Aorta (tissue), 5 donors: ENCODE measurements at regions of chr7 and their contacts with region 1.

Region 1: GRCh38 chr7:130440527-130441365 is at the start of gene CEP41:
- DNase-seq: peak; percentile 98 to 99
- ATAC-seq: peak; percentile 98
- H3K4me3 ChIP-seq: peak within 1 kb of the TSS; percentile 61 to 80
- H3K27ac ChIP-seq: no peak within 1 kb of the TSS
- H3K4me1 ChIP-seq: no peaks in the 10 kb centered on the region
- H3K27me3 ChIP-seq: no peaks in the 10 kb centered on the region
- total RNA-seq, gene CEP41: 6.2 to 6.6 TPM

Region 2: GRCh38 chr7:130381468-130382312 is 59.1 kb before region 1 on chr7:
- intact Hi-C with region 1: no loop called
- DNase-seq: no peak
- ATAC-seq: no peak
- H3K4me3 ChIP-seq: no peak overlapping the region
- H3K27ac ChIP-seq: no peak overlapping the region
- H3K4me1 ChIP-seq: no peaks in the 10 kb centered on the region
- H3K27me3 ChIP-seq: no peaks in the 10 kb centered on the region

Region 3: DNA sequence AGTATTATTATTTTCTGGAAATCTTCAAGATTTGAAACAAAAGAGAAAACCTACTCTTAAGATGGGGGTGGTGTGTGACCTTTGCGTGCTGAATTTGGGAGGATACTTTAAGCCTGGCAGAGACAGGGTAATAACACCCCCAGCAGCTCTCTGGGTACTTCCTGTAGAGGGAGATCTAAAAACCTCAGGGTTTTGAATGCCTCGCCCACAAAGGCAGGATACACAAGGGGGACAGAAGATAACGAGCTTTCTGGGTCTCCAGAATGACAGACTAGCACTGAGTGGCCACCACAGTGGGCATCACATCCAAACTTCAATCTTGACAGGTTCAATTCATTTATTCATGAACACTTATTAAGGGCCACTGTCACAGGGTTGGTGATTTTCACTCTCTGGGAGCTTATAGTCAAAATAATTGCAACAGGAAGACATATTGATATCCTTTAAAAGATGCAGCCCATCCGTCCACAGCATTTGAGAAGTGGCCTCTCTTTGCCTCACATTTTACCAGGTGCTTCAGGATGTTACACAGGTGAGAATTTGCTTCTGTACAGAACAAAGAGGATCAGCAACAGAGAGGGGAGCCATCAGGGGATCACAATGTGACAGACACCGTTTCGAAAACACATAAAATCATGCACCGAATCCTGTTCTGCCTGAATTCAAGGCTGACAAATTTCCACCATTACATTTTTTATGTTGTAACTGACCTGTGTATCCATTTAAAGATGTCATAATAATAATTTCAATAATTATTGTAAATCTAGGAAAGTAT is 46.1 kb before region 1 on chr7:
- intact Hi-C with region 1: loop called in 1 of 2 experiments (anchors 5 kb)
- DNase-seq: no peak
- ATAC-seq: no peak
- H3K4me3 ChIP-seq: no peak overlapping the region
- H3K27ac ChIP-seq: no peak overlapping the region
- H3K4me1 ChIP-seq: no peaks in the 10 kb centered on the region
- H3K27me3 ChIP-seq: no peaks in the 10 kb centered on the region